ENCODE measurements at regions of chr2 and their contacts with region 1.

Region 1: GRCh38 chr2:201231781-201232466 is 28.4 kb upstream of the CASP8 start:
- DNase-seq: peak; percentile 79
- ATAC-seq: peak; percentile 65
- H3K4me3 ChIP-seq: peak overlapping the region in 1 of 2 experiments; percentile 14; a peak in 1 of 4 replicates
- H3K27ac ChIP-seq: peak overlapping the region; percentile 97
- H3K4me1 ChIP-seq: peaks cover 28% of the 10 kb centered on the region
- H3K27me3 ChIP-seq: no peaks in the 10 kb centered on the region
- CTCF ChIP-seq: peak; percentile 97

Region 2: DNA sequence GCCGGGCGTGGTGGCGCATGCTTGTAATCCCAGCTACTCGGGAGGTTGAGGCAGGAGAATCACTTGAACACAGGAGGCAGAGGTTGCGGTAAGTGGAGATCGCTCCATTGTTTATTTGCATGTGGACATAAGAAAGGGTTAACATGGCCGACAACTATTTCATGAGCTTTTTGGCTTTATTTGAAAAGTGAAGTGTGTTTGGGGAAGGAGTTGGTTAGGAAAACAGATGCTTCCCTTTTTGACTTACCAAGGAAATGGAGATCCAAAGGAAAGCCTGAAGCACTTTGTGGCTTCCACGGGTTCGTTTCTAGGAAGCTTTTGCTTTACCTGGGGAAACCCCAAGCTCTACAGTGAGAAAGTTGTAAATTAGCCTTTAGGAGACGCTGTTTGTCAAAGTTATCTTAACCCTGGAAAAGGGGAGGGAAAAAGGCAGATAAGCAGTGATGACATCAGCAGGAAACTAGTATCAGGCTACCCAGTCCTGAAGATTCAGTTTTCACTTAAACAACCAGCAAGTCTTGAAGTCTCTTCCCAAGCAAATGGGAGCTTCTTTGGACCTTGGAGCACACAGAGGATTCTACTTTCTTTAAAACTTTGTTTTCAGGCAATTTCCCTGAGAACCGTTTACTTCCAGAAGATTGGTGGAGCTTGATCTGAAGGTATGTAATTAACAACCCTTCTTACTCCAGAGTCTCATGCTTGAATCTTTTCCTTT is 49.1 kb before region 1 on chr2 and contains the start of gene CASP10:
- CTCF ChIA-PET with region 1: interaction called, 12 read pairs
- POLR2A ChIA-PET with region 1: no interaction called
- in situ Hi-C with region 1: no loop called
- intact Hi-C with region 1: no loop called
- DNase-seq: no peak
- ATAC-seq: peak; percentile 57
- H3K4me3 ChIP-seq: peak within 1 kb of the TSS in 1 of 2 experiments; percentile 42; a peak in 2 of 4 replicates
- H3K27ac ChIP-seq: peak within 1 kb of the TSS; percentile 40; the same call in 1 of the 2 replicates
- H3K4me1 ChIP-seq: no peaks in the 10 kb centered on the region; the same call in 1 of the 2 replicates
- H3K27me3 ChIP-seq: no peaks in the 10 kb centered on the region
- CTCF ChIP-seq: peak; percentile 46
- total RNA-seq, gene CASP10: 0.87 TPM

Region 3: GRCh38 chr2:201363857-201364560 is 132.1 kb after region 1 on chr2:
- CTCF ChIA-PET with region 1: no interaction called
- POLR2A ChIA-PET with region 1: no interaction called
- in situ Hi-C with region 1: no loop called
- intact Hi-C with region 1: loop called (anchors 1 kb)
- DNase-seq: peak; percentile 42
- ATAC-seq: peak; percentile 80
- H3K4me3 ChIP-seq: no peak overlapping the region
- H3K27ac ChIP-seq: no peak overlapping the region
- H3K4me1 ChIP-seq: no peaks in the 10 kb centered on the region
- H3K27me3 ChIP-seq: no peaks in the 10 kb centered on the region
- CTCF ChIP-seq: peak; percentile 86

Region 4: GRCh38 chr2:201420442-201421113 is 188.7 kb after region 1 on chr2:
- CTCF ChIA-PET with region 1: no interaction called
- POLR2A ChIA-PET with region 1: no interaction called
- in situ Hi-C with region 1: no loop called
- intact Hi-C with region 1: no loop called
- DNase-seq: no peak
- ATAC-seq: no peak
- H3K4me3 ChIP-seq: no peak overlapping the region
- H3K27ac ChIP-seq: no peak overlapping the region
- H3K4me1 ChIP-seq: no peaks in the 10 kb centered on the region
- H3K27me3 ChIP-seq: no peaks in the 10 kb centered on the region
- CTCF ChIP-seq: no peak

Region 5: DNA sequence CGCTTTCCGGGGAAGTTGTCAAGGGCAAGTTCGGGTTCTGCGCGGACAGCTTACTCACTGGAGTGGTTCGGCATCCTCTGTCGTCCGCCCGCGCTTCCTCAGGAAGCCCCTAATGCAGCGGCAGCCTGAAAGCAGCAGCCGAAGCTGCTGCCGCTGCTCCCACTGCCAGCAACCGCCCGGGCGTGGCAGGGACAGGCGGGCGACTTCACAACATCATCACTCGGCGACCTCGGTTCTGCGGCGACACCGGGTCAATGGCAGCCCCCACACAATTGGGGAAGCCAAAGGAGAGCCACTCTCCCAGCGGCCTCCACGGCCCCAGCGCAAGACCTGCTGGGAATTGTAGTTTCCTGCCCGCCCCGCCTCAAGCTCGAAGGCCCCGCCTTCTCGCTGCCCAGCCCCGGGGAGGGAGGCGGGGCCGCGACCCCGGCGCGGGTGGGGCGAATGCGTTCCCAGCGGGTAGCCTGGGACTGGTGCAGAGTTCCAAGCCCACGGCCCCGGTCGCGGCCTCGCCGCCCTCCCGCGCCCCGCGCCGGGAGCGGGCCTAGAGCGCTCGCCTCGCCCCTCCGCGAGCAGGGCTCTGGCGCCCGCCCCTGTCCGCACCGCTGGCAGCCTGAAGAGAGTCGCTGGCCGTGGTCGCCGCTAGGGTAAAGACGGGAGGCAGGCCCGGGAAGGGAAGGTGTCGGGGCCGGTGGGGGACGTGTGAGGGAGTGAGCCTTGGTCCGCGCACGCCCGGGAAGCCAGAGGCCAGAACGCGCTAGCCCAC is 219.6 kb after region 1 on chr2 and contains the starts of genes STRADB and TRAK2:
- CTCF ChIA-PET with region 1: interaction called, 10 read pairs
- POLR2A ChIA-PET with region 1: no interaction called
- in situ Hi-C with region 1: no loop called
- intact Hi-C with region 1: no loop called
- DNase-seq: peak; percentile 74
- ATAC-seq: peak; percentile 99
- H3K4me3 ChIP-seq: peak within 1 kb of the TSS; percentile 79 to 80
- H3K27ac ChIP-seq: peak within 1 kb of the TSS; percentile 77
- H3K4me1 ChIP-seq: peaks cover 12% of the 10 kb centered on the region
- H3K27me3 ChIP-seq: no peaks in the 10 kb centered on the region
- CTCF ChIP-seq: peak; percentile 45
- total RNA-seq, gene STRADB: 33.4 TPM
- total RNA-seq, gene TRAK2: 35.7 TPM

Region 6: GRCh38 chr2:201621293-201621999 is 389.5 kb after region 1 on chr2:
- CTCF ChIA-PET with region 1: no interaction called
- POLR2A ChIA-PET with region 1: no interaction called
- in situ Hi-C with region 1: no loop called
- intact Hi-C with region 1: loop called (anchors 10 kb)
- DNase-seq: no peak
- ATAC-seq: no peak
- H3K4me3 ChIP-seq: no peak overlapping the region
- H3K27ac ChIP-seq: no peak overlapping the region
- H3K4me1 ChIP-seq: no peaks in the 10 kb centered on the region
- H3K27me3 ChIP-seq: no peaks in the 10 kb centered on the region
- CTCF ChIP-seq: no peak